Gastrocnemius medialis (tissue), 4 donors: ENCODE measurements at regions of chr18 and their contacts with region 1.

Region 1: DNA sequence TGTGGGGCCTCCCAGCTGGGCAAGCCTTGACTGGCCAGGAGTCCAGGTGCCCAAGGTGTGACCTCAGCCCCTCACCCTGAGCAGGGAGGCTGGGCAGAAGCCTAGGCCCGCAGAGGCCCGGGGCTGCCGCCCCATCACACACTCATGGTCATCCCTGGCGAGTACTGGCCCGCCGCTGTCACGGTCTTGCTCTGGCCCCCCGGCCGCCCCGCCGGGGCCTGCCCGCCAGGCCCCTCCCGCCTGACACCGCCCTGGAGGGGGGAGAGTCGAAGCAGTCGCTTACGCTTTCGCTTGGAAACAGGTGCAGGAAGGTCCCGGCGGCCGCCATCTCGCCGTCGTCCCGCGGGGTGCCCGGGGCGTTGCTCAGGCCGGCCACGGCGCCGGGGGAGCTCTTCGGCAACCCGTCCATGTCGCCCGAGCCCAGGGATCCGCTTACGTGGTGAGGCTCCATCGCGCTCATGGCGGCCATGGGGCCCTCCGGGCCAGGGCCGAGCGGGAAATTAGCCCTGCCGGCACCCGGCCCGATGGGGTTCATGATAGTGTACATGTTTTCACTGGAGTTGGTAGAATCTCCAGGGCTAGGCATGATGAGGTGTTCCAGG is 26.6 kb upstream of the ANKRD62 start:
- DNase-seq: no peak
- ATAC-seq: no peak
- H3K4me3 ChIP-seq: no peak overlapping the region
- H3K27ac ChIP-seq: no peak overlapping the region
- H3K4me1 ChIP-seq: no peaks in the 10 kb centered on the region
- H3K27me3 ChIP-seq: no peaks in the 10 kb centered on the region
- CTCF ChIP-seq: no peak
- POLR2A ChIP-seq: no peak

Region 2: DNA sequence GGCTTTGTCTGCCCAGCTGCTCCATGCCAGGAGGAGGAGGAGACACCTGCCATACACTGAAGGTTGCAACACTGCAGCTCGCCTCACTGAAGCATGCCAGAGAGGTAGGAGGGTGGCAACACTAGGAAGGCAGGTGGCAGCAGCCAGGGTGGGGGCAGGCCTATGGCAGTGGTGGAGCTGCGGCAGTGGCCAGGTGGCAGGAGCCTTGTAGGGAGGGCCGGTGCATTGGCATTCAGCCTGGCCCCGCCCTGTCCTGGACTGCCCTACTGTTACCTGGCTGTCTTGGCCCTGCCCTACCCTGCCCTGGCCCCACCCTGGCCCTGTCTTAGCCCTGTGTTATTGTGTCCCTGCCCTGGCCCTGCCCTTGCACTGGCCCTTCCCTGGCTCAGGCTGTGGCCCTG is 19.2 kb after region 1 on chr18:
- in situ Hi-C with region 1: no loop called
- intact Hi-C with region 1: loop called (anchors 2 kb)
- DNase-seq: peak in 1 of 2 donors; percentile 31
- ATAC-seq: peak in 1 of 2 donors; percentile 17
- H3K4me3 ChIP-seq: no peak overlapping the region
- H3K27ac ChIP-seq: no peak overlapping the region
- H3K4me1 ChIP-seq: no peaks in the 10 kb centered on the region
- H3K27me3 ChIP-seq: no peaks in the 10 kb centered on the region
- CTCF ChIP-seq: no peak
- POLR2A ChIP-seq: no peak